ENCODE measurements at regions of chr15 and their contacts with region 1.

Region 1: GRCh38 chr15:41989259-41989933 is 17.0 kb upstream of the EHD4 start:
- DNase-seq: peak; percentile 93
- H3K4me3 Mint-ChIP-seq: no peak overlapping the region
- H3K27ac Mint-ChIP-seq: no peak overlapping the region
- H3K4me1 Mint-ChIP-seq: no peaks in the 10 kb centered on the region
- H3K27me3 Mint-ChIP-seq: peaks cover 3% of the 10 kb centered on the region

Region 2: GRCh38 chr15:42018306-42019224 is 29.2 kb after region 1 on chr15:
- CTCF ChIA-PET with region 1: interaction called, 11 read pairs
- intact Hi-C with region 1: no loop called
- DNase-seq: no peak
- H3K4me3 Mint-ChIP-seq: no peak overlapping the region
- H3K27ac Mint-ChIP-seq: no peak overlapping the region
- H3K4me1 Mint-ChIP-seq: no peaks in the 10 kb centered on the region
- H3K27me3 Mint-ChIP-seq: no peaks in the 10 kb centered on the region

Region 3: GRCh38 chr15:42065033-42065432 is 75.6 kb after region 1 on chr15:
- CTCF ChIA-PET with region 1: interaction called, 33 read pairs
- intact Hi-C with region 1: no loop called
- DNase-seq: no peak
- H3K4me3 Mint-ChIP-seq: no peak overlapping the region
- H3K27ac Mint-ChIP-seq: no peak overlapping the region
- H3K4me1 Mint-ChIP-seq: no peaks in the 10 kb centered on the region
- H3K27me3 Mint-ChIP-seq: peaks cover 9% of the 10 kb centered on the region

Region 4: DNA sequence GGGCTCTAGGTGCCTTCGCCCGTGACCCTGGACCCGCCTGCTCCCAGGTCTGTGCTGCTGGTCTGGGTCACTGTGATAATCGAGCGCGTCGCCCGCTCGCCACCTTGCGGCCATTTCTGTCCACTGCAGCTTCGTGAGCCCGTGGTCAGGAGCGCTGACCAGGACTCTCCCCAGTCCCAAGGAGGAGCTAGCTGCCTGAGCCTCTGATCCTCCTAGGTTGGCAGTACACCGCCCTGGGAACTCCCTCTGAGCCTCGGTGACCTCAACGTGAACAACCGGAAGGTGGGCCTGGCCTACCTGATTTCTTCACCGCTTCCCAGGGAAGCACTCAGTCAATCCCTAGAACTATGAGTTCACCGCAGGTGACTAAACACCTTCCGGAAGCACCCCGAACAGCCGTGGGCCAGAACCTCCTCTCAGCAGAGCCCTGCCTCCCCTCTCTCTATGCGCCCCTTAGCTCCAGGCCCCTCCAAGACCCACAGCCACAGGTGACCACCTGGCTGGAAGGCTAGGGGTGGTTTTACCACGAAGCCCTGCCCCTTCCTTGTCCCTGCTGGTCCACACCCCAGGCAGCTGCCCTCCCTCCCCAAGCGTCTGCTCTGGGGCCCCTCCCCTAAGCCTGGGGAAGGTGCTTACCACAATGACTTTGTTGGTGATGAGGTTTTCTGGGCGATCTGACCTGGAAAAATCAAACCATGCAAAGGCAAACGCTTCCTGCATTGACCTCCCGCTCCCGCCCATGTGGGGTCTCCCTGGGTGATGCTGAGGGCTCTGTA is 95.3 kb after region 1 on chr15:
- CTCF ChIA-PET with region 1: interaction called, 65 read pairs
- intact Hi-C with region 1: loop called (anchors 1 kb)
- DNase-seq: peak; percentile 57
- H3K4me3 Mint-ChIP-seq: no peak overlapping the region
- H3K27ac Mint-ChIP-seq: no peak overlapping the region
- H3K4me1 Mint-ChIP-seq: peaks cover 4% of the 10 kb centered on the region
- H3K27me3 Mint-ChIP-seq: peaks cover 6% of the 10 kb centered on the region

Region 5: DNA sequence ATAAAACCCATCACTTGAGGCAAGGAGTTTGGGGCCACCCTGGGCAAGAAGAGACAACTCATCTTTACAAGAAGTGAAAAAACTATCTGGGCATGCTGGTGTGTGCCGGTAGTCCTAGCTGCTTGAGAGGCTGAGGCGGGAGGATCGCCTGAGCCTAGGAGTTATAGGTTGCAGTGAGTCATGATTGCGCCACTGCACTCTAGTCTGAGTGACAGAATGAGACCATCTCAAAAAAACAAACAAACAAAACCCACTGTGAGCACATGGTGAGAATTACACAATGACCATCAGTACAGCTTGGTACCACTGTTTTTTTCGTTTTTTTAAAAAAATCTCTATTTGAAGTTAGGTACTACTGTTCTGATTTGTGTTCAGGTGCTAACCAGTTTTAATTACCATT is 205.1 kb after region 1 on chr15:
- CTCF ChIA-PET with region 1: no interaction called
- intact Hi-C with region 1: no loop called
- DNase-seq: peak; percentile 71
- H3K4me3 Mint-ChIP-seq: no peak overlapping the region
- H3K27ac Mint-ChIP-seq: peak overlapping the region; percentile 94
- H3K4me1 Mint-ChIP-seq: peaks cover 63% of the 10 kb centered on the region
- H3K27me3 Mint-ChIP-seq: no peaks in the 10 kb centered on the region

Region 6: DNA sequence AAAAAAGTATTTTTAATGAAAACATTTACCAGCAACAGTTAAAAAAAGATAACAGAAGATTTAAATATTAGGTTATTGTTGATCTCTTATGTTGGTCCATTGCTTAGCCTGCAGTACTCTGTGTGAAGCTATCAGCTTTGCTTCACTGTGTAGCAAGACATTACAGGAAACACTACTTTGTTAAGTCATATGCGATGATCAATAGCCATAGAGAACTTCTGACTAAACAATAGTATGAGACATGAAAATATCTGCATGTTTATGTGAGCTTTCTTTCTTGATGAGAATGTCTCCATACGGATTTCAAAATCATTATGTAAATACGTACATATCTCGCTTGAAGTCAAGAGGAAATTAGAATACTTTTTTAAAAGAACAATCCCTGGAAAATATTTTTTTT is 342.9 kb after region 1 on chr15:
- CTCF ChIA-PET with region 1: no interaction called
- intact Hi-C with region 1: no loop called
- DNase-seq: no peak
- H3K4me3 Mint-ChIP-seq: no peak overlapping the region
- H3K27ac Mint-ChIP-seq: no peak overlapping the region
- H3K4me1 Mint-ChIP-seq: no peaks in the 10 kb centered on the region
- H3K27me3 Mint-ChIP-seq: no peaks in the 10 kb centered on the region

Region 7: GRCh38 chr15:42474827-42475226 is 485.4 kb after region 1 on chr15:
- CTCF ChIA-PET with region 1: no interaction called
- intact Hi-C with region 1: loop called (anchors 2 kb)
- DNase-seq: no peak
- H3K4me3 Mint-ChIP-seq: no peak overlapping the region
- H3K27ac Mint-ChIP-seq: no peak overlapping the region
- H3K4me1 Mint-ChIP-seq: peaks cover 7% of the 10 kb centered on the region
- H3K27me3 Mint-ChIP-seq: no peaks in the 10 kb centered on the region

Measured in activated naive CD4-positive, alpha-beta T cell treated with anti-CD3 and anti-CD28 coated beads for 36 hours (primary cell).